Posterior cingulate gyrus (tissue), 11 donors: ENCODE measurements at regions of chr7 and their contacts with region 1.

Region 1: DNA sequence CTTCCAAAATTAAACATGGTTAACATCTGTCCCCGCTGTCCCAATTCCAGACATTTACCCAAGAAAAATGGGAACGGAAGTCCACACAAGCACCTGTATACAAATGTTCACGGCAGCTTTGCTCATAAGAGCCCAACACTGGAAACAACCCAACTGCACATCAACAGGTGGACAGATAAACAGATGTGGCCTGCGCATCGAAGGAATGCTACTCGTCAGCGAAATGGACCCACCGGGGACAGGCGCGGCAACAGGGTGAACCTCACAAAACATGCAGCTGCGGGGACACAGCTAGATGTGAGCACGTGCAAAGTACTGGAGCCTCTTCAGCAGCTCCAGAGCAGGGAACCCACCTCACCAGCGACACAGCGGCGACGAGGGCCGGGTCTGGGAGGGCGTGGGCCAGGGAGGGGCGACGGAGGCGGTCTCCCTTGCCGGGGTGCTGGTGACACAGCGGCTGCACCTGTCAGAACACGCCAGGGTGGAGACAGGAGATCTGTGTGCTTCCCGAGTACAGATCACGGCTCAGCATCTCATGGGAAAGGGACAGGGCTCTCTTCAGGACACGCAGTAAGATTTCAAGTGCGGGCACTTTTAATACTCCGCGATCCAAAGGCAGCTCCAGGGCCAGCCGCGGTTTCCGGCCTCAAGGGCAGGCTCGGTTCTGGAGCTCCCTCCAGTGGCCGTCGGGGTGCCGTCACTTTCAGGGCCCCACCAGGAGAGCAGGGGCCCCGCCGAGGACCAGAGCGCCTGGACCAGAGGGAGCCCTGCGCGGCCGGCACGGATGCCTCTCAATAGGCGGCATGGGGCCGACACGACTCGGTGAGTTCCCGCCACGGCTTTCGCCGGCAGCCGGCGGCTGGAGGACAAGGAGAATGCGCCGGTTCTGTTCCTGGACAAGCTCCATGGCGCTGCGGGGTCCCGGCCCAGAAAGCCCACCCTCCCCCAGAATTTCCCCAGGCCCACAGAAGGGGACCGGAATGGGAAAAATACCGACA is 21.2 kb downstream of the GPR146 start:
- DNase-seq: peak; percentile 76 to 98 (median 86)

Region 2: DNA sequence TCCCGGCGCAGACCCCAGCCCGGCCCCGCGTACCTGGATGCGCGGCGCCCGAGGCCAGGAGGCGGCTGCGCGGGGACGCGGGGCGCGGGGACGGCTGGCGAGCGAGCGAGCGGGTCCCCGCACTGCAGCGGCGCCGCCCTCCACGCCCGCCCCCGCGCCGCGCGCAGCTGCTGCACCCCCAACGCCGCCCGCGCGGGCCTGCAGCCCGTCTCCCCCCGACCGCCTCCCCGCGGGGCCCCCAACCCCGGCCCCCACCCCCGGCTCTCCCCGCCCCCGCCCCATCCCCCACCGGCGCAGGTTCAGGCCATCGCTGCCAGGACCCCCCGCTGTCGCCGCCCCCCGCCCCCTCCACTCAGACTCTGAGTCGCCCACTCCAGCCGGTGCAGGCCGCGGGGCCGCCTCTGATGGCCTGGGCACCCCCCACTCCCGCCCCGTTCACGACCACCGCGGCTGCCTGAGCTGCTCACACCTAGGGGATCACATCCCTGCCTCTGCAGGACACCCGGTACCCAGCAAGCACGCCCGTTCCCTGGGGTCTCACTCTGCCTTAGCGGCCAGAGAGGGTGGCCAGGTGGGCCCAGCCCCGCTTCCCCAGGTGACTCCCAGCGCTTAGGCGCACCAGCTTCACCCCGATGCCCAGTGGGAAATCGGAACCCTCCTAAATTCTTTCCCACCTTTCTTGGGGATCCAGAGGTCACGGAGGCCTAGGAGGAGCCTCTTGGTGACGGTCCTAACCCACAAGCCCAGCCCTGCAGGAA is 353.0 kb before region 1 on chr7:
- intact Hi-C with region 1: no loop called
- DNase-seq: peak in 2 of 10 donors; percentile 80 to 88

Region 3: DNA sequence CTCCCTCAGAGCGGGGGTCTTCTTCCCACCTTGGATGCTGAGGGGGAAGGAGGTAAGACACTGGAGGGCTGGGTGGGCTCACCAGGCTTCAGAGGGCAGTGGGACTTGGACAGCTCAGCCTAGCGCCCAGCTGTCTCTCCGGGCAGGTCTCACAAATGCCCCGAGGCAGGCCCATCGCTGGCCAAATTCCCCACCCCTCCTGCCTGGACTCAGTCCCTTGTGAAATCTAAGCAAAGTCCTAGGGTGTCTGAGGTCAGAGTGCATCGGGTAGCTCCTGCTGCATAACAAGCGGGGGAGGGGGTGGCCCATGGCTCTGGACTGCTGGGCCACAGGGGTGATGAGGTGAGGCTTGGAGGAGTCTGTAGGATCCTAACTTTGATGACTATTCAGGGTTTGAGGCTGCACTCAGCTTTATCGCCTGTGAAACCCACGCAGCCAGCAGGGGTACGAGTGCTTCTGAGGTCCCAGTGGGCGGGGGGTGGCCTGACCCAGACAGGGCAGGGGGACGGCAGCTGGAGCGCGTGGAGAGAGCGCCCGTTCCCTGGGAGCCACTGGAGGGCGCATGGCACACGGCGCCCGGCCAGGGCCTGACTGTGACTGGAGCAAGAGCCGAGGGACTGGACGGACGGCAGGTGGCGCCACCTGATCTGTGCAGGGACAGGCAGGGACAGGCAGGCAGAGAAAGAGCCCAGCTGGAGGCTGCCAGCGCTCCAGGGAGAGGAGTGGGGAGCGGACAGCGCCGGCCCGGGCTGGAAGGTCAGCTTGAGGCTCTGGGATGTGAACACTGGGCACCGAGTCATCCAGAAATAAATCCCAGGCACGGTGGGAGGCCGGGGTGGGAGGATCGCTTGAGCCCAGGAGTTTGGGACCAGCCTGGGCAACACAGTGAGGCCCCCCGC is 72.6 kb before region 1 on chr7:
- intact Hi-C with region 1: loop called (anchors 1 kb)
- DNase-seq: peak; percentile 94 to 100 (median 99)

Region 4: DNA sequence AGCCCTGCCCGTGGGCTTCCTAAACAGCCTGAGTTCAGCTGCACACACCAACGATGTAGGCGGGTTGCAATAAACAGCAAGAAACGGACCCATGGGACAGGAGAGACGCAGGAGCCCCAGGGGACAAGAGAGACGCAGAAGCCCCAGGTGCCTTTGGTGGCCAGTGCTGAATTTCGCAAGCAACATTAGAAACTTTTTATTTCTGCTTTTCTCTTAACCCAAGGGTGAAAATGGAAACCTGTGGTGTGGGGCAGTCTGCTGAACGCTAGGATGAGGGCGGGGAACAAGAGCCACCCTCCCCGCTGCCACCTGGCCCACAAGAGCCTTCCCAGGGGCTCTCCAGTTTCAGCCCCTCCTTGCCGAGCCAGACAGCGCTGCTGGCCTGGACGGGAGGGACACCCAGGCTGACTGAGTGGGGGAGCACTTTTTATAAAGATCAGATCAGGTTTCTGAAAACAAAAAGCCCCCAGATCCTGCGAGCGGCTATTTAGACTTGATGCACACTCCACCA is 41.2 kb before region 1 on chr7:
- intact Hi-C with region 1: loop called (anchors 5 kb)
- DNase-seq: peak in 1 of 10 donors; percentile 55

Region 5: GRCh38 chr7:1123715-1124114 is 58.2 kb after region 1 on chr7:
- intact Hi-C with region 1: no loop called
- DNase-seq: peak; percentile 56 to 95 (median 73)

Region 6: DNA sequence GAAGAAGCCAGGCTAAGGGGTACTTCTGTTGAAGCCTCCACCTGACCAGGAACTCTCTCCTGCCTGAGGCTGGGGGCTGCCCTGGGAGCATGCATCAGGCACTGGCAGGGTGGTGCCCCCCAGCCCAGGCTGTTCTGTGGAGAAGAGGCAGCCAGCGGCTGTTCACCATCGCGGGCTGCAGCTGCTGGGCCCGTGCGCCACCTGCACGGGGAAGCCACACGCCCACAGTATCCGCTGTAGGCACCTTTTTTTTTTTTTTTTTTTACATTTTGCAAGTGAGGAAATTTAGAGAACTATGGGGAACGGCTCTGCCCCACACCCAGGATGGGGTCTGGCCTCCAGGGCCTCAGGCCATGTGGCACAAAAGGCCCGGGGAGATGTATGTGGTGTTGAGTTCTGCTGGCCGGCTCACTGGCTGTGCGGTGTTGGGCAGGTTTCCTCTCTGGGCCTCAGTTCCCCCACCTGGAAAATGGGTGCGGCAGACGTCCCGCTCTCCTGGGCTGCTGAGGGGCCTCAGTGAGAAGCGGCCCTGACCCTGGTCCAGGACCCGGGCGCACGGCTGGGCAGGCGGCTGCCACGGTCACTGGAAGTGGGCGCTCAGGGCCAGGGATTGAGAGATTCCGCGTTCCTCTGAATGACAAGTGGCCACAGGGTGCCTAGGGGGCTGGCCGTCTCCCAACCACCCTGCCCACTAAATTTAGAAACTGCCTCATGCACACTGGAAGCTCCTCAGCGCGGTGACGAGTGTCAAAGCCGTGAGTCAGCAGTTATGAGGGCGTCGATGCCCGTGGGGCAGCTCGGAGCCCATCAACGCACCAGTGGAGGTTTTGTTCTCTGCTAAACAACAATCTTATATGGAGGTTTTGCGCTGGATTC is 447.5 kb after region 1 on chr7:
- intact Hi-C with region 1: no loop called
- DNase-seq: peak; percentile 20 to 95 (median 70)